ENCODE measurements at regions of chr10 and their contacts with region 1.

Region 1: DNA sequence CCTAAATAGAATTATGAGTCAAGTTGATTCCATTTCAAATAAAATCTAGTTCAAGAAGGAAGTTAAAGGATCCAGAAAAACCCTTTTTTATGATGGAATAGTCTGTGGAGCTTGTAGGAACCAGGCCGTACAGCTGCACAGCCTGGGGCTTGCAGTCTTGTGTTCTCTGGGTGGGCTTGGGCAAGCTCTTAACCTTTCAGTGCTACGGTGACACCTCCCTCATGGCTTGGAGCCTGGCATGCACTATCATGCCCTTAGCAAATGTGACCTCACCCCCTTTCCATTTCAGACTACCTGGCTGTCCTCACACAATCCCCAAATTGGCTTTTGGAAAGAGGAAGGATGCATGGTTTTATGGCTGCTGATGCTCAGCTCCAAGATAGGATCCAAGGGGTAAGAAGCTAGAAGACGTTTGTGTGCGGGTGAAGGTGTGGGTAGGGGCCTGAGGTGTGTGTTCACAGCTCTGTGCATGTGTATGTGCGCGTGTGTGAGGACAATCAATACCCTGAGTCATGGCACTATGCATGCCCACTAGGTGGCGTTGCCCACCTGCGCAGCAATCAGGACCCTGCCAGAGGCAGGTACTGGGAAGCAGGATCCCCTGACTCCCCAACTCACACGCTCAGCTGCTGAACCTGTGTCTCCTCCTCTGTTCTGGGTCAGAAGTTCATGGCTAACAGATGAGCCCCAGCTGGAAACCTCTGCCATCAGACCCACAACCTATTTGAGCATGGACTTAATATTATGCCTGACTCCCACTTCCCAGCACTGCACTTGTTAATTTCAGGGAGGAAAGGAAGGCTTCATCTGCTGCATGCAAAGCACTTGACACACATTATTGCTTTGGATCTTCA is 113.4 kb downstream of the PTPN20 start:
- DNase-seq: peak; percentile 53 to 82 (median 64)
- ATAC-seq: peak; percentile 80
- H3K4me3 ChIP-seq: no peak overlapping the region
- H3K4me3 Mint-ChIP-seq: no peak overlapping the region
- H3K27ac ChIP-seq: no peak overlapping the region
- H3K27ac Mint-ChIP-seq: no peak overlapping the region
- H3K4me1 ChIP-seq: peaks cover 7% of the 10 kb centered on the region
- H3K4me1 Mint-ChIP-seq: peaks cover 6% of the 10 kb centered on the region
- H3K27me3 ChIP-seq: no peaks in the 10 kb centered on the region
- H3K27me3 Mint-ChIP-seq: no peaks in the 10 kb centered on the region
- CTCF ChIP-seq: peak; percentile 86

Region 2: DNA sequence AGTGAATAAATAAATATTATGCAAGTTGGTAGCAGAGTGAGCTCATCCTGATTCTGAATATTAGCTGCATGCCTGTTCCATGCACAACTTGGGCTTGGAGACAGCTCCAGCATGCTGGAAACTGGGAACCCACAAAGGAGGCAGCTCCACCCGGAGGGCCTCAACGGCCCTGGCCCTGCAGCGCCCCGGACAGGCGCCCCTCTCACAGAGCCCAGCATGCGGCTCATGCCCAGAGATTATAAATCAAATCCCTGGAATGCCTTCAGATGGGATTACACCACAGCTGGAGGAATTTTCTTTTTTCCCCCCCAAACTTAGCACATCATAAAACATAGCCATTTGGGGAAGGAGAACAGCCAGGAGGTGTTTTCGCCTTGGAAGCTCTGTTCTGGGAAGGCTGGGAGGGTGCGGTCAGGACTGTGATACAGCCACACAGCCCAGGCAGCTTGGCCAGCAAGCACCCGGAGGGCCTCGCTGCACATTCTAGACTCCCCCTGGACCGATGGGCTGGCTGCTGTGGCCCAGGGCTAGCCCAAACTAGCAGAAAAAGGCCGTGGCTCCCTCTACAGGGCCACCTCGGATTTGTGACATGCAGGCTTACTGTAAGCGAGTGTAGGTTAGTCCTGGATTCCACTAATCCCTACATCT is 11.0 kb before region 1 on chr10:
- CTCF ChIA-PET with region 1: no interaction called
- POLR2A ChIA-PET with region 1: no interaction called
- intact Hi-C with region 1: no loop called
- DNase-seq: no peak
- ATAC-seq: no peak
- H3K4me3 ChIP-seq: no peak overlapping the region
- H3K4me3 Mint-ChIP-seq: no peak overlapping the region
- H3K27ac ChIP-seq: no peak overlapping the region
- H3K27ac Mint-ChIP-seq: no peak overlapping the region
- H3K4me1 ChIP-seq: no peaks in the 10 kb centered on the region
- H3K4me1 Mint-ChIP-seq: no peaks in the 10 kb centered on the region
- H3K27me3 ChIP-seq: peaks cover 0 to 14% of the 10 kb centered on the region in 2 experiments
- H3K27me3 Mint-ChIP-seq: no peaks in the 10 kb centered on the region
- CTCF ChIP-seq: no peak

Region 3: DNA sequence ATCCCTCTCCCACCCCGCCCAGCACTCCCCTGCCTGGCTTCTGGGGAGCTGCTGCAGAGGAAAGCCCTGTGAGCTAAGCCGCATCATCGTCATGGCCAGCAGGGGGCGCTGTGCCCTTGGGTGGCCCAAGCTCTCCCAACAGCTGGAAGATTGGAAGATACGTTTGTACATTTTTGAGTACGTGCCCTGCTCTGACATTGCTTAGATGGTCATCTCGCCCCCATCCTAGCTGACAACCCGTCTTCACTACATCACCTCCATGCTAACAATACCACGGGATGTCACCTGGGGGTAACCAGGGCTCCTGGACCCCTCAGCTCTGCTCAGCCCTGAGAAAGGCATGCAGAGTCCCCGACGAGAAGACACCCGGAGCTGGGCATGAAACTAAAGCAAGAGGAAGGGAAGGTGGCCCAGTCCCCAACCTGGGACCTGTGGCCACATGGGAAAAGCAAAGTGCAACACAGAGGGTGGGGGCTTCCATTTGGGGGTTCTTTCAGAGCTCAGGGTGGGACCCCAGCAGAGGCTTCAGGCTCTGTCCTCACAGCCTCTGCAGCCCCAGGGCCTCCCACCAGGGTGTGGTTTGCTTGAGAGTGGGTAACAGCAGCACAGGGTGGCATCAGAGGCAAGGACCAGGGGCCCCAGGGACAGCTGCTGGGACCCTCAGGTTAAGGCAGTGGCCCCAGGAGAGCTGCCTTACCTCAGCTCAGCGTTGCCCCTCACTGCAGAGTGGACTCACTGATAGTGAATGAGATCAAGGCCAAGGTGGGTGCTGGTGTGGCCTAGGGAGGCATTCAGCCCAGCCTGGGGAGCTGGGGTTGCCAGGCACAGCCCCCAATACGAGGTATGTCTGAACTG is 23.3 kb after region 1 on chr10:
- CTCF ChIA-PET with region 1: interaction called, 6 read pairs
- POLR2A ChIA-PET with region 1: no interaction called
- intact Hi-C with region 1: loop called in 1 of 2 experiments (anchors 2 kb)
- DNase-seq: peak; percentile 60 to 87 (median 74)
- ATAC-seq: peak; percentile 60
- H3K4me3 ChIP-seq: no peak overlapping the region
- H3K4me3 Mint-ChIP-seq: no peak overlapping the region
- H3K27ac ChIP-seq: no peak overlapping the region
- H3K27ac Mint-ChIP-seq: no peak overlapping the region
- H3K4me1 ChIP-seq: peaks cover 17% of the 10 kb centered on the region
- H3K4me1 Mint-ChIP-seq: peaks cover 23% of the 10 kb centered on the region
- H3K27me3 ChIP-seq: no peaks in the 10 kb centered on the region
- H3K27me3 Mint-ChIP-seq: no peaks in the 10 kb centered on the region
- CTCF ChIP-seq: peak; percentile 86

Region 4: GRCh38 chr10:47340608-47341170 is 316.1 kb after region 1 on chr10:
- CTCF ChIA-PET with region 1: interaction called, 8 read pairs
- POLR2A ChIA-PET with region 1: no interaction called
- intact Hi-C with region 1: loop called (anchors 1 kb)
- DNase-seq: peak; percentile 44 to 81 (median 66)
- ATAC-seq: peak; percentile 75
- H3K4me3 ChIP-seq: no peak overlapping the region
- H3K4me3 Mint-ChIP-seq: no peak overlapping the region
- H3K27ac ChIP-seq: no peak overlapping the region
- H3K27ac Mint-ChIP-seq: no peak overlapping the region
- H3K4me1 ChIP-seq: no peaks in the 10 kb centered on the region
- H3K4me1 Mint-ChIP-seq: no peaks in the 10 kb centered on the region
- H3K27me3 ChIP-seq: peaks cover 0 to 5% of the 10 kb centered on the region in 2 experiments
- H3K27me3 Mint-ChIP-seq: peaks cover 6% of the 10 kb centered on the region
- CTCF ChIP-seq: peak; percentile 99